Spleen (tissue), 13 donors: ENCODE measurements at regions of chr7 and their contacts with region 1.

Region 1: GRCh38 chr7:21507626-21508343 is 35.1 kb upstream of the DNAH11 start:
- DNase-seq: no peak
- H3K4me3 ChIP-seq: no peak overlapping the region
- H3K27ac ChIP-seq: no peak overlapping the region
- H3K4me1 ChIP-seq: no peaks in the 10 kb centered on the region
- H3K27me3 ChIP-seq: no peaks in the 10 kb centered on the region
- CTCF ChIP-seq: peak; percentile 34 to 81 (median 74)
- POLR2A ChIP-seq: no peak

Region 2: GRCh38 chr7:20778063-20778721 is 729.6 kb before region 1 on chr7:
- intact Hi-C with region 1: loop called (anchors 5 kb)
- DNase-seq: peak; percentile 76
- H3K4me3 ChIP-seq: peak overlapping the region in 7 of 8 donors; percentile 8 to 56 (median 23)
- H3K27ac ChIP-seq: no peak overlapping the region
- H3K4me1 ChIP-seq: peaks cover 3 to 18% (median 11%) of the 10 kb centered on the region in 6 donors
- H3K27me3 ChIP-seq: peaks cover 5 to 100% (median 98%) of the 10 kb centered on the region in 7 donors
- CTCF ChIP-seq: peak in 8 of 11 experiments; percentile 34 to 74 (median 51)
- POLR2A ChIP-seq: no peak